ENCODE measurements at regions of chr10 and their contacts with region 1.

Region 1: DNA sequence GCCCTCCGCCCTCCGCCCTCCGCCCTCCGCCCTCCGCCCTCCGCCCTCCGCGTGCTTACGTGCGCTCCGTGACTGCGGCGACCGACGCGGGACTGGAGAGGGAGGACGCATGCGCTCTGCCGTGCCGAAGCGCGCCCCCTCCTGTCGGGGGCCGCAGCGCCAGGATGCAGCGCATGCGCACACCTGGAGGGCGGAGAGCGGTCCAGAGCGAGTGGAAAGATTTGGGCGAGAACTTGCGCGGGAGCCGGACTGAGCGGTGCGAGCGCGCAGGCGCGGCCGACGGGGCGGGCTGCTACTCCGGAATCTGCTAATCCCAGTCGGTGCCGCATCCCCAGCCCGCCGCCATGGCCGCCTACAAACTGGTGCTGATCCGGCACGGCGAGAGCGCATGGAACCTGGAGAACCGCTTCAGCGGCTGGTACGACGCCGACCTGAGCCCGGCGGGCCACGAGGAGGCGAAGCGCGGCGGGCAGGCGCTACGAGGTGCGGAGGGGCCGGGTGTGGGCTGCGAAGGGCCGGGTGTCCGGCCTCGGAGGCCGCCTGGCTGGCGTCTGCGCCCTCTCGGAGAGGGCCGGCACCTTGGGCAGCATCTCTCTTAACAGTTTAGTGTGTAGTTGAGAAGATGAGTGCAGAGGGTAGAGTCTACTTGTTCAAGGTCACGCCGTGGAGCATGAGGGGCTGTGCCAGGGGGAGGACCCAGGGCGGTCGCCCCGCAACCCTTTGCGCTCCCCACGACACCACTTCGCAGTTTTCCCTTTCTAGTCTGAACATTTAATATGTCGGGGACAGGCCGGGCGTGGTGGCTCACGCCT is at the start of gene PGAM1:
- DNase-seq: peak; percentile 93 to 99
- ATAC-seq: peak; percentile 88 to 94 (median 89)
- H3K4me3 ChIP-seq: peak within 1 kb of the TSS; percentile 88
- H3K4me3 Mint-ChIP-seq: peak within 1 kb of the TSS; percentile 89
- H3K27ac ChIP-seq: peak within 1 kb of the TSS; percentile 88
- H3K27ac Mint-ChIP-seq: peak within 1 kb of the TSS; percentile 86 to 95
- H3K4me1 ChIP-seq: peaks cover 38% of the 10 kb centered on the region
- H3K4me1 Mint-ChIP-seq: peaks cover 19 to 37% of the 10 kb centered on the region in 2 donors
- H3K27me3 ChIP-seq: no peaks in the 10 kb centered on the region
- H3K27me3 Mint-ChIP-seq: no peaks in the 10 kb centered on the region
- CTCF ChIP-seq: peak; percentile 56
- total RNA-seq, gene PGAM1: 92.6 to 104 (median 96.0) TPM

Region 2: GRCh38 chr10:97407211-97407951 is 18.8 kb before region 1 on chr10:
- intact Hi-C with region 1: loop called (anchors 1 kb)
- DNase-seq: peak; percentile 56 to 87
- ATAC-seq: peak; percentile 94 to 95 (median 95)
- H3K4me3 ChIP-seq: peak overlapping the region; percentile 3
- H3K4me3 Mint-ChIP-seq: peak overlapping the region; percentile 58
- H3K27ac ChIP-seq: peak overlapping the region; percentile 39
- H3K27ac Mint-ChIP-seq: peak overlapping the region; percentile 62 to 82
- H3K4me1 ChIP-seq: peaks cover 23% of the 10 kb centered on the region
- H3K4me1 Mint-ChIP-seq: peaks cover 14 to 20% of the 10 kb centered on the region in 2 donors
- H3K27me3 ChIP-seq: no peaks in the 10 kb centered on the region
- H3K27me3 Mint-ChIP-seq: no peaks in the 10 kb centered on the region
- CTCF ChIP-seq: peak; percentile 86

Region 3: GRCh38 chr10:97445722-97446639 is 19.8 kb after region 1 on chr10 and contains the starts of genes EXOSC1 and ZDHHC16:
- intact Hi-C with region 1: loop called (anchors 1 kb)
- DNase-seq: peak; percentile 80 to 95
- ATAC-seq: peak; percentile 97 to 99 (median 98)
- H3K4me3 ChIP-seq: peak within 1 kb of the TSS; percentile 72
- H3K4me3 Mint-ChIP-seq: peak within 1 kb of the TSS; percentile 99
- H3K27ac ChIP-seq: peak within 1 kb of the TSS; percentile 46
- H3K27ac Mint-ChIP-seq: peak within 1 kb of the TSS; percentile 93 to 95
- H3K4me1 ChIP-seq: peaks cover 19% of the 10 kb centered on the region
- H3K4me1 Mint-ChIP-seq: peaks cover 42 to 44% of the 10 kb centered on the region in 2 donors
- H3K27me3 ChIP-seq: no peaks in the 10 kb centered on the region
- H3K27me3 Mint-ChIP-seq: no peaks in the 10 kb centered on the region
- CTCF ChIP-seq: no peak
- total RNA-seq, gene EXOSC1: 36.9 to 44.4 (median 37.6) TPM
- total RNA-seq, gene ZDHHC16: 11.3 to 18.7 (median 12.7) TPM

Region 4: DNA sequence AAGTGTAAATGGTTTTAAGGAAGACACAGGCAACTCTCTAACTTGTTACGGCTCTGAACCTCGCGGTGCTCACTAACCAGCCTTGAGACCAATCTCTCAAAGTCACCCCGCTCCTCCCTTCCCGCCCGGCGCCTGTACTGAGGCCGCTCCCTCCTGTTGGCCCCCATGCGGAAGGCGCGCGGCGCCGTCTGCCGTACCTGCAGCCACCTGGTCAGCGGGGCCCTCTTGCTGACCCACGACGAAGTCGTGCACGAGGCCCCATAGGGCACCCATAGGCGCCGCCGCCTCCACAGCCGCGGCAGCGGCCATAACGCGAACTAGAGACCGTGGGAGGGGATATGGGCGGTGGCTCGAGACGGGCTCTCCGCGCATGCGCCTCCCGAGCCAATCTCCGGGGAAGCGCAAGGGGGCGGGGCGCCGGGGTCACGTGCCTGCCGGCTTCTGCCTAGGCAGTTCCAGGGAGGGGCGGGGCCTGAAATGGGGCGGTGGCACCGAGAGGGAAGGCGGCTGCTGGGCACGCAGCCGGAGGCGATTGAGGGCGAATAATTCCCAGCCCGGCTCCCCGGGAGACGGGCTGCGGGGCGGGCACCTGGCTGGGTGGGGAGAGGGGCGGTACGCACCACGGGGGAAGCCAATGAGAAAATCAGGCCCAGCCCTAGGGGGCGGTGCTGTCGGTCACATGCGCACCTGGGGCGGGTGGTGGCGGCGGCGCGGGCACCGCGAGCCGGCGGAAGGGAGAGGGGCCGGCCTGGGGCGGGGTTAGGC is 72.1 kb after region 1 on chr10 and contains the start of gene MMS19:
- intact Hi-C with region 1: loop called (anchors 5 kb)
- DNase-seq: peak; percentile 99 to 100
- ATAC-seq: peak; percentile 87 to 95 (median 89)
- H3K4me3 ChIP-seq: peak within 1 kb of the TSS; percentile 83
- H3K4me3 Mint-ChIP-seq: peak within 1 kb of the TSS; percentile 98
- H3K27ac ChIP-seq: peak within 1 kb of the TSS; percentile 72
- H3K27ac Mint-ChIP-seq: peak within 1 kb of the TSS; percentile 91 to 98
- H3K4me1 ChIP-seq: peaks cover 7% of the 10 kb centered on the region
- H3K4me1 Mint-ChIP-seq: peaks cover 33 to 38% of the 10 kb centered on the region in 2 donors
- H3K27me3 ChIP-seq: peaks cover 12% of the 10 kb centered on the region
- H3K27me3 Mint-ChIP-seq: peaks cover 23 to 24% of the 10 kb centered on the region in 2 donors
- CTCF ChIP-seq: no peak
- total RNA-seq, gene MMS19: 53.8 to 68.4 (median 61.7) TPM

Region 5: GRCh38 chr10:97673736-97674525 is 247.8 kb after region 1 on chr10:
- intact Hi-C with region 1: no loop called
- DNase-seq: no peak
- ATAC-seq: no peak
- H3K4me3 ChIP-seq: no peak overlapping the region
- H3K4me3 Mint-ChIP-seq: no peak overlapping the region
- H3K27ac ChIP-seq: no peak overlapping the region
- H3K27ac Mint-ChIP-seq: no peak overlapping the region
- H3K4me1 ChIP-seq: peaks cover 6% of the 10 kb centered on the region
- H3K4me1 Mint-ChIP-seq: no peaks in the 10 kb centered on the region
- H3K27me3 ChIP-seq: no peaks in the 10 kb centered on the region
- H3K27me3 Mint-ChIP-seq: no peaks in the 10 kb centered on the region
- CTCF ChIP-seq: no peak

Measured in natural killer cell (primary cell).